HAP-1 (cell line): ENCODE measurements at regions of chr14 and their contacts with region 1.

Region 1: GRCh38 chr14:50985124-50985858 is 41.0 kb upstream of the PYGL start:
- DNase-seq: peak; percentile 56 to 68
- H3K4me3 ChIP-seq: peak overlapping the region; percentile 5; the same call in 1 of the 2 replicates
- H3K4me1 ChIP-seq: peaks cover 42% of the 10 kb centered on the region
- H3K27me3 ChIP-seq: no peaks in the 10 kb centered on the region

Region 2: GRCh38 chr14:49786315-49787110 is 1198.8 kb before region 1 on chr14:
- in situ Hi-C with region 1: no loop called
- DNase-seq: no peak
- H3K4me3 ChIP-seq: no peak overlapping the region
- H3K4me1 ChIP-seq: peaks cover 6% of the 10 kb centered on the region
- H3K27me3 ChIP-seq: no peaks in the 10 kb centered on the region

Region 3: DNA sequence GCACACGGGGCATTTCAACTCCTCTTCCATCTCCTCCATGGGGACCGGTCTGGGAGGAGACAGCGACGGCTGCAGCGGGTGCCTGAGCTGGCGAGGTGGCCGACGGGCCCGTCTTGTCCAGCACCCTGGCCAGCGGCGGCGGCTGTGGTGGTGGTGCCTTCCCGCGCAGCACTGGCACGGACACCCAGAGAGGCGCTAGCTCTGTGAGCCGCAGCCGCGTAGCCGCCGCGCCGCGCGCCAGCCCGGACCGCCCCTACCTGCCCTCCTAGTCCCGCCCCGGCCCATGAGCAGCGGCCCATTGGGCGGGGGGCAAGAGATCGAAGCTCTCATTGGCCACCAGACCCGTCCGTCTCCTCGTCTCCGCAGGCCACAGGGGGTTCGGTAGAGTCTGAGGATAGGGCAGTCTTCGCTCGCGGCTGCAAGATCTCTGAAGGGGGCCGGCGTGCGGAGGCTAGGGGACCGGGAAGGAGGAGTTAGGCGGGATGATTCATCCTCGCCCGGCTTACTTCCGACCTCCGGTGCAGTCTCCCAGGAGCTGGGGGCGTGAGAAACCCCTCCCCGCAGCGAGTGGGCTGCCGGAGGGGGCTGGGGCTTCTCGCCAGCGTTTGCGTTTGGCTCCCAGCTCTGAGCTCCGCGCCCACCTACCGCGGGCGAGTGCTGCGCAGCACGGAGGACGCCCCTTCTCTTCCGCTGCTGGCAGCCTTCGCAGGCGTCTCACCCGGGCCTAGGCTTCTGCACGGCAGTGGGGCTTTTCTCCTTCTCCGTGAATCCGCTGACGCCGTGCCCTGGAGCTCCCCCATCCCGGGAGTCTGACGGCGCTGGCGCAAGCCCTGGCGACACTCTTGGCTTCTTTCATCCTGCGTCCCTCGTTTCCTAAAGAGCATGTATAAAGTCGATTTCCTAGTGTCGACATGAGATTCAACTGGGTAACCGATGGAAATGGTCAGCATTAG is 109.9 kb after region 1 on chr14 and contains the start of gene TRIM9:
- in situ Hi-C with region 1: loop called (anchors 5 kb)
- DNase-seq: peak; percentile 96 to 99
- H3K4me3 ChIP-seq: peak within 1 kb of the TSS; percentile 63
- H3K4me1 ChIP-seq: peaks cover 41% of the 10 kb centered on the region
- H3K27me3 ChIP-seq: no peaks in the 10 kb centered on the region